ENCODE measurements at regions of chr11 and their contacts with region 1.

Region 1: GRCh38 chr11:72141066-72141465 is 5.5 kb downstream of the FOLR3 start:
- DNase-seq: peak; percentile 45
- ATAC-seq: peak; percentile 60
- H3K4me3 Mint-ChIP-seq: no peak overlapping the region
- H3K27ac Mint-ChIP-seq: peak overlapping the region; percentile 9
- H3K4me1 Mint-ChIP-seq: peaks cover 17% of the 10 kb centered on the region
- H3K27me3 Mint-ChIP-seq: peaks cover 4% of the 10 kb centered on the region
- CTCF ChIP-seq: no peak

Region 2: GRCh38 chr11:72091005-72091691 is 49.9 kb before region 1 on chr11:
- CTCF ChIA-PET with region 1: interaction called, 20 read pairs
- POLR2A ChIA-PET with region 1: no interaction called
- intact Hi-C with region 1: no loop called
- DNase-seq: peak; percentile 82
- ATAC-seq: peak; percentile 97
- H3K4me3 Mint-ChIP-seq: no peak overlapping the region
- H3K27ac Mint-ChIP-seq: peak overlapping the region; percentile 75
- H3K4me1 Mint-ChIP-seq: peaks cover 5% of the 10 kb centered on the region
- H3K27me3 Mint-ChIP-seq: no peaks in the 10 kb centered on the region
- CTCF ChIP-seq: peak; percentile 80

Region 3: GRCh38 chr11:72123117-72123653 is 17.9 kb before region 1 on chr11:
- CTCF ChIA-PET with region 1: interaction called, 20 read pairs
- POLR2A ChIA-PET with region 1: no interaction called
- intact Hi-C with region 1: no loop called
- DNase-seq: no peak
- ATAC-seq: no peak
- H3K4me3 Mint-ChIP-seq: no peak overlapping the region
- H3K27ac Mint-ChIP-seq: no peak overlapping the region
- H3K4me1 Mint-ChIP-seq: no peaks in the 10 kb centered on the region
- H3K27me3 Mint-ChIP-seq: no peaks in the 10 kb centered on the region
- CTCF ChIP-seq: no peak

Region 4: DNA sequence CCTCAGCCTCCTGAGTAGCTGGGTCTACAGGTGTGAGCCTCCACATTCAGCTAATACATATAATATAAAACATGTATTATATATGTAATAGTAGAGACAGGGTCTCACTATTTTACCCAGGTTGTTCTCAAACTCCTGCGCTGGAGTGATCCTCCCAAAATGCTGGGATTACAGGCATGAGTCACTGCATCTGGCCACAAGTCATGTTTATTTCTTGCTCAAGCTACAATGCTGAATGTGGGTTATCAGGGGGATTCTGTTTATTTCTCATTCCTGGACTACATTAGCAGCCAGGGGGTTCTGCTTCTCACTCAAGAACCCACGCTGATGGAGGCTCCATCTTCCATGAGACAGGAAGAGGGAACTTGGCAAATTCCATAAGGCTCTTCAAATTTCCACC is 19.3 kb after region 1 on chr11:
- CTCF ChIA-PET with region 1: interaction called, 21 read pairs
- POLR2A ChIA-PET with region 1: no interaction called
- intact Hi-C with region 1: no loop called
- DNase-seq: no peak
- ATAC-seq: no peak
- H3K4me3 Mint-ChIP-seq: no peak overlapping the region
- H3K27ac Mint-ChIP-seq: no peak overlapping the region
- H3K4me1 Mint-ChIP-seq: no peaks in the 10 kb centered on the region
- H3K27me3 Mint-ChIP-seq: peaks cover 15% of the 10 kb centered on the region
- CTCF ChIP-seq: no peak

Region 5: GRCh38 chr11:72238040-72238450 is 97.0 kb after region 1 on chr11:
- CTCF ChIA-PET with region 1: interaction called, 13 read pairs
- POLR2A ChIA-PET with region 1: no interaction called
- intact Hi-C with region 1: no loop called
- DNase-seq: peak; percentile 59
- ATAC-seq: peak; percentile 83
- H3K4me3 Mint-ChIP-seq: no peak overlapping the region
- H3K27ac Mint-ChIP-seq: no peak overlapping the region
- H3K4me1 Mint-ChIP-seq: peaks cover 15% of the 10 kb centered on the region
- H3K27me3 Mint-ChIP-seq: peaks cover 33% of the 10 kb centered on the region
- CTCF ChIP-seq: peak; percentile 73

Region 6: DNA sequence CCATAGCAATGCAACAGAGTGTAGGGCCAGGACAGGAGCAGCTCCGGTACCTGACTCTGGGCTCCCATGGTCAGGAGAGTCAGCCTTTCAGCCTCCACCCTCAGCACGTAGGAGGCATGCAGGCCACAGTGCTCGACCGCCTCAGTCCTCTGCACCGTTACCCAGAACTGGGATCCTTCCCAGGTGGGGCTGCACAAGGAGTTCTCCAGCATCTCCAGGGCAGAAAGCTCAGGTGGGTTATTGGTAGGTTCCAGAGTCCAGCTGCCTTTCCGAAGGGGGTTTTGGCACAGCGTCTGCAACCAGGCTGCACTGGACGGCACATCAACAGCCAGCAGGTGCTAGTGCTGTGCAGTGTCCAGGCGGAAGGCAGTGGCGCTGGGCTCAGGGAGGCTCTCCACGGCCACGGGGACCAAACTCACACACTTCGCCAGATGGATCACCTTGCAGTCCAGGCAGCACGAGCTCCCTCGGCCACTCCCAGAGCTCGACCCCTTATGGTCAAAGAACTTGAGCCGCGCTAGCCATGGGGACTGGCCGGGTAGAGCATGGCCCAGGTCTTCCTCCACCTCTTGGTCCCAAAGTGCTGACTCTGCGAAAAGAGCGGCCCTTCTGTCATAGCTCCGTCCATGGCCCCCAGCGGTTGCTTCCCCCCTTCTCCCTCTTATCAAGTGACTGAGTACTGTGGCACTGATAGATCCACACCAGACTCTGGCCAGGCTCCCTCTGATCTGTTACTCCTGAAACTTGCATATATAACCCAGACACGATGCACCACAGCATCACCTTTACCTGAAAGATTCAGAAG is 109.8 kb after region 1 on chr11:
- CTCF ChIA-PET with region 1: no interaction called
- POLR2A ChIA-PET with region 1: no interaction called
- intact Hi-C with region 1: no loop called
- DNase-seq: no peak
- ATAC-seq: no peak
- H3K4me3 Mint-ChIP-seq: no peak overlapping the region
- H3K27ac Mint-ChIP-seq: no peak overlapping the region
- H3K4me1 Mint-ChIP-seq: no peaks in the 10 kb centered on the region
- H3K27me3 Mint-ChIP-seq: peaks cover 7% of the 10 kb centered on the region
- CTCF ChIP-seq: no peak

Region 7: GRCh38 chr11:72278911-72279310 is 137.8 kb after region 1 on chr11:
- CTCF ChIA-PET with region 1: no interaction called
- POLR2A ChIA-PET with region 1: no interaction called
- intact Hi-C with region 1: no loop called
- DNase-seq: no peak
- ATAC-seq: no peak
- H3K4me3 Mint-ChIP-seq: no peak overlapping the region
- H3K27ac Mint-ChIP-seq: no peak overlapping the region
- H3K4me1 Mint-ChIP-seq: no peaks in the 10 kb centered on the region
- H3K27me3 Mint-ChIP-seq: peaks cover 34% of the 10 kb centered on the region
- CTCF ChIP-seq: no peak

Region 8: GRCh38 chr11:72333661-72334060 is 192.6 kb after region 1 on chr11:
- CTCF ChIA-PET with region 1: no interaction called
- POLR2A ChIA-PET with region 1: no interaction called
- intact Hi-C with region 1: no loop called
- DNase-seq: peak; percentile 68
- ATAC-seq: peak; percentile 91
- H3K4me3 Mint-ChIP-seq: no peak overlapping the region
- H3K27ac Mint-ChIP-seq: peak overlapping the region; percentile 21
- H3K4me1 Mint-ChIP-seq: peaks cover 24% of the 10 kb centered on the region
- H3K27me3 Mint-ChIP-seq: no peaks in the 10 kb centered on the region
- CTCF ChIP-seq: no peak

Region 9: DNA sequence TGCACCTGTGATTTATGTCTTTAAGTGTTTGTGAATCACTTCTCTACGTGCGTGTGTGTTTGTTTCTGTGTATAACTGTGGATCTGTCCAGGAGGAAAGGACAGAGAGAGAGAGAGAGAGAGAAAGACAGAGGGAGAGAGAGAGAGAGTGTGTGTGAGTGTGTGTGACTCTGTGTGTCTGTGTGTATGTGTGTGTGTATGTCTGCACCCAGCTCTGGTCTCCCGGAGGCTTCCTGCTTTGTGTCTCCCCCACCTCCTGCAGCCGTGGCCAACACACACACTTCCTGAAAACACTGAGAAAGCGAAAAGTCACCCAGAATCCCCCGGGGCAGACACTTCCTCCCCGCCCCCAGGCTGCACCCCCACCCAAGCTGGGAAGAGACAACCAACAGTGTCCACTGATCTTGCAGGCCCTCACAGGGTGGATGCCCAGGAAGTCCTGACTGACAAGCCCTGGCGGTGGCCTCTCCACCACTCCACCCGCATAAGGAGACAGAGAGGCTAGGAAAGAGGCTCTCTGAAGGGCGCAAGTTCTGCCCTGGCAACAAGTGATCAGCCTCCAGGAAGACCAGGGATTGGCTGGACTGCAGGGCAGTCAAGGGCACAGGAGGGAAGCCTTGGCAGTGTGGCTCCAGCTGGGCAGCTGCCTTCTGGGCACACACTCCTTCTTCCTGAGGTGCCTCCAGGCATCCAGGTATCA is 581.1 kb after region 1 on chr11:
- CTCF ChIA-PET with region 1: no interaction called
- POLR2A ChIA-PET with region 1: no interaction called
- intact Hi-C with region 1: no loop called
- DNase-seq: peak; percentile 91
- ATAC-seq: peak; percentile 90
- H3K4me3 Mint-ChIP-seq: peak overlapping the region; percentile 92
- H3K27ac Mint-ChIP-seq: peak overlapping the region; percentile 95
- H3K4me1 Mint-ChIP-seq: peaks cover 44% of the 10 kb centered on the region
- H3K27me3 Mint-ChIP-seq: no peaks in the 10 kb centered on the region
- CTCF ChIP-seq: no peak

Measured in activated CD8-positive, alpha-beta T cell treated with anti-CD3 and anti-CD28 coated beads for 36 hours (primary cell).